ENCODE measurements at regions of chr11 and their contacts with region 1.

Region 1: GRCh38 chr11:9460322-9461067 is at the start of gene ZNF143:
- DNase-seq: peak; percentile 99
- ATAC-seq: peak; percentile 85
- H3K4me3 Mint-ChIP-seq: peak within 1 kb of the TSS; percentile 97
- H3K27ac Mint-ChIP-seq: peak within 1 kb of the TSS; percentile 98
- H3K4me1 Mint-ChIP-seq: peaks cover 30% of the 10 kb centered on the region
- H3K27me3 Mint-ChIP-seq: no peaks in the 10 kb centered on the region
- CTCF ChIP-seq: no peak
- total RNA-seq, gene ZNF143: 37.8 and 41.1 TPM in 2 replicates

Region 2: GRCh38 chr11:9265211-9266131 is 195.0 kb before region 1 on chr11 and contains the start of gene DENND5A:
- CTCF ChIA-PET with region 1: no interaction called
- POLR2A ChIA-PET with region 1: interaction called, 16 read pairs
- intact Hi-C with region 1: loop called (anchors 1 kb)
- DNase-seq: peak; percentile 54
- ATAC-seq: peak; percentile 61
- H3K4me3 Mint-ChIP-seq: peak within 1 kb of the TSS; percentile 94
- H3K27ac Mint-ChIP-seq: peak within 1 kb of the TSS; percentile 93
- H3K4me1 Mint-ChIP-seq: peaks cover 37% of the 10 kb centered on the region
- H3K27me3 Mint-ChIP-seq: no peaks in the 10 kb centered on the region
- CTCF ChIP-seq: no peak
- total RNA-seq, gene DENND5A: 23.2 and 24.4 TPM in 2 replicates

Region 3: GRCh38 chr11:9384535-9385303 is 75.8 kb before region 1 on chr11 and contains the start of gene IPO7:
- CTCF ChIA-PET with region 1: interaction called, 3 read pairs
- POLR2A ChIA-PET with region 1: interaction called, 41 read pairs
- intact Hi-C with region 1: loop called (anchors 1 kb)
- DNase-seq: peak; percentile 75
- ATAC-seq: peak; percentile 98
- H3K4me3 Mint-ChIP-seq: peak within 1 kb of the TSS; percentile 94
- H3K27ac Mint-ChIP-seq: peak within 1 kb of the TSS; percentile 90
- H3K4me1 Mint-ChIP-seq: peaks cover 36% of the 10 kb centered on the region
- H3K27me3 Mint-ChIP-seq: no peaks in the 10 kb centered on the region
- CTCF ChIP-seq: no peak
- total RNA-seq, gene IPO7: 95.7 and 96.3 TPM in 2 replicates

Region 4: GRCh38 chr11:9506489-9507276 is 46.2 kb after region 1 on chr11:
- CTCF ChIA-PET with region 1: interaction called, 5 read pairs
- POLR2A ChIA-PET with region 1: interaction called, 11 read pairs
- intact Hi-C with region 1: no loop called
- DNase-seq: peak; percentile 42
- ATAC-seq: peak; percentile 80
- H3K4me3 Mint-ChIP-seq: no peak overlapping the region
- H3K27ac Mint-ChIP-seq: no peak overlapping the region
- H3K4me1 Mint-ChIP-seq: peaks cover 16% of the 10 kb centered on the region
- H3K27me3 Mint-ChIP-seq: no peaks in the 10 kb centered on the region
- CTCF ChIP-seq: peak; percentile 71

Region 5: GRCh38 chr11:9663699-9664275 is 203.3 kb after region 1 on chr11 and contains the start of gene SWAP70:
- CTCF ChIA-PET with region 1: no interaction called
- POLR2A ChIA-PET with region 1: interaction called, 3 read pairs
- intact Hi-C with region 1: loop called (anchors 1 kb)
- DNase-seq: peak; percentile 97
- ATAC-seq: peak; percentile 83
- H3K4me3 Mint-ChIP-seq: peak within 1 kb of the TSS; percentile 96
- H3K27ac Mint-ChIP-seq: peak within 1 kb of the TSS; percentile 97
- H3K4me1 Mint-ChIP-seq: peaks cover 73% of the 10 kb centered on the region
- H3K27me3 Mint-ChIP-seq: no peaks in the 10 kb centered on the region
- CTCF ChIP-seq: no peak
- total RNA-seq, gene SWAP70: 277 and 288 TPM in 2 replicates

Region 6: GRCh38 chr11:10455637-10456487 is 995.4 kb after region 1 on chr11:
- CTCF ChIA-PET with region 1: no interaction called
- POLR2A ChIA-PET with region 1: no interaction called
- intact Hi-C with region 1: loop called (anchors 5 kb)
- DNase-seq: peak; percentile 69
- ATAC-seq: peak; percentile 70
- H3K4me3 Mint-ChIP-seq: peak overlapping the region; percentile 87
- H3K27ac Mint-ChIP-seq: peak overlapping the region; percentile 96
- H3K4me1 Mint-ChIP-seq: peaks cover 95% of the 10 kb centered on the region
- H3K27me3 Mint-ChIP-seq: no peaks in the 10 kb centered on the region
- CTCF ChIP-seq: no peak